PC-9 (cell line): ENCODE measurements at regions of chr19 and their contacts with region 1.

Region 1: DNA sequence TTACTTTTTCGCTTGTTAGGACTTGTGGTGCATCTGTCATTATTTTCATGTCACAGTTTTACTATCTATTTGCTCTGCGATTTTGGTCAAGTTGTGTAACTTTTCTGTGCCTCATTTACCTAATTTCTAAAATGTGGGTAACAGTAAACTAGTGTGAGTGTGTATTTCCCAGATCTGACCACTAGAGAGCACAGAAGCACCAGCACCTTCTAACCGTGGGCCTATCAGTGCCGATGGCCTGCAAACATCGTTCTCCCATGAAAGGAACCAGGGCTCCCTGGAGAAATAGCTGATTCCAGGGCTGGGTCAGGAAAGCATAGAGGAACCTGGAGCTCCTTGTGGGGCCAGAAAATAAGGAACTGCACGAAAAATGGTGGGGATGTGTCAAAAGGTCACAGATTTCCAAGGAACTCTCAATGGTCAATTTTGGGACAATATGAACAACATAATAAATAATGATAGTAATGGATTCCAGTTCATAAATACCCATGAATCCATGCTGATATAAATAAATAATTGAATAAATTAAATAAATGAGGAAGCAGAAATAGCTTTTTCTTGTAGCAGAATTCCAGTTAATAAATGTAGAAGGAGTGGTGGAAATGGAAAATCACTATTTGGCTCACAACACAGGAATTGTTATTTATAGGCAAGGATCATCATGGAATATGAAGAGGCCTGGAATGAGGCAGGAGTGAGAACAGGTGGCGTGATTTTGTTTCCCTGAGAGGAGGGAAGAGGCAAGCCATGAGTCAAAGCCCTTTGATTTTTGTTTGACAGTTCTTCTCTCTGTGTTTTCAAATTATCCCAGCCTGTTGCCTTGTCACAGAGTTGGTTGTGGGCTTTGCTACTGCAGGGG is 31.1 kb downstream of the CEACAM8 start:
- DNase-seq: peak in 1 of 2 experiments; percentile 26
- H3K4me3 ChIP-seq: no peak overlapping the region
- H3K27ac ChIP-seq: no peak overlapping the region
- H3K4me1 ChIP-seq: no peaks in the 10 kb centered on the region
- H3K27me3 ChIP-seq: no peaks in the 10 kb centered on the region
- CTCF ChIP-seq: peak; percentile 73

Region 2: DNA sequence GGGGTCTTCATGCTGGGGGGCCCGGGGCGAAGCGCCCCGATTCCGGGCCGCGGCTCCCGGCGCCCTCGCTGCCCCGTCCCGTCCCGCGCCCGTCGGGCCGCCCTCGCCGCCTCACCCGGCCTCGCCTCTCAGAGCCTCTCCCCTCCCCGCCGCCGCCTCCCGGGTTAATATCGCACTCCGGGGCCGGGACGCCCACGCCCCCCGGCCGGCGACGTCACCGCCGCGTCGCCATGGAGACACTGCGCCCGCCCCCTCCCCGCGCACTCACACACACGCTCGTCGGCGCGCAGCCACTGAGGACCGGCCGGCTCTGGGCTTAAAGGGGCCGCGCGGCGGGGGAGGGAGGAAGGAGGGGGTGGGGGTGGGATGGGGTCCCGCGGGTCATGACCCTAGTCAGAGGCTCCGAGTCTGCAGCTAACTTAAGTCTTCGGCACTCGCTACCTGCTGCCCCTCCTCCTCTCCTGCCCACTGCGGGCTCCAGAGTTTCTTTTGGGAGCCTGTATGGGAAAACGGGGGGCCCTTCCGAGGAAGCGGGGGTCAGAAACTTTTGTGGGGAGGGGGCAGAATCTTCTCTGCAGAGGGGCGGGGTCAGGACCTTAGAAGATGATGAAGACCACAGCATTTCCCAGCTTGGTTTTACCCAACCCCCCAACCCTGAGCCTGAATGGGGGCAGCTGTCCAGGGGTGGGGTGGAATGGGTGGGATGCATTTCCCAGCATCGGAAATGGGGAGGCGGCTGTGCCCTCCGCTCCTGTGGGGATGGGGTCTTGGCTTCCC is 308.4 kb before region 1 on chr19 and contains the start of gene ERF:
- CTCF ChIA-PET with region 1: interaction called, 10 read pairs
- POLR2A ChIA-PET with region 1: no interaction called
- intact Hi-C with region 1: no loop called
- DNase-seq: peak; percentile 71 to 93
- H3K4me3 ChIP-seq: peak within 1 kb of the TSS; percentile 98
- H3K27ac ChIP-seq: 0 out of 2 replicates have a peak within 1 kb of the TSS, but pooled peaks have one; percentile 13
- H3K4me1 ChIP-seq: peaks cover 13% of the 10 kb centered on the region
- H3K27me3 ChIP-seq: no peaks in the 10 kb centered on the region
- CTCF ChIP-seq: no peak
- total RNA-seq, gene ERF: 57.4 and 79.1 TPM in 2 replicates

Region 3: DNA sequence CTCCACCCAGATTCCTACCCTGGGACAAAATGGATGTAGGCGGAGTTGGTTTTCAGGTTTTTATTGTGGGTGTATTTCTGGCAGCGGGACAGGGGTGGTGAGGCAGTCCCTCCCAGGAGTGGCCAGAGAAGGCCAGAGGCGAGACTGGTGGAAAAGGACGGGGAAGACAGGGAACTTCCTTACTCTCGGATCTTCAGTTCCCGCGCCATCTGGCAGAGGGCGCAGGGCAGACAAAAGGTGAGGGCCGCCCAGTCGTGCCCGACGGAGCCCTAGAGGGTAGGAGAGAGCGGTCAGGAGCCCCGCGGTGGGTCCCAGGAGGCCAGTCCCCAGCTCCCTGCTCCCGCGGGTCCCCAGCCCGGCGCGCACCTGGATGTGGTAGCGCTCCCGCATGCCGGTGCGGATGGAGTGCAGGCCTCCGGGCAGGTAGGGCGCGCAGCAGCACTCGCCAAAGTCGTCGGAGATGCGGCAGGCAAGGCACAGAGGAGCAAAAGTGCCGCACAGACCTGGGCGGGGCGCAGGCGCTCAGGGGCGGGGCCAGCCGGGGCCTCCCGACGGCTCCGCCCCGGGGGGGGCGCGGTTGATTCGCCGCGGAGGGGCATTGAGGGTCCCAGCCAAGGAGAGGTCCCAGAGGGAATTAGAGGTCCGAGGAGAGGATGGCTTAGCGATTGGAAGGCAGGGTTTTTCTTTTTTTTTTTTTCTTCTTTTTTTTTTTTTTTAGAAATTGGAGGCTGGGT is 176.4 kb before region 1 on chr19:
- CTCF ChIA-PET with region 1: no interaction called
- POLR2A ChIA-PET with region 1: no interaction called
- intact Hi-C with region 1: no loop called
- DNase-seq: peak; percentile 69 to 89
- H3K4me3 ChIP-seq: peak overlapping the region; percentile 63
- H3K27ac ChIP-seq: peak overlapping the region; percentile 10; the same call in 1 of the 2 replicates
- H3K4me1 ChIP-seq: peaks cover 17% of the 10 kb centered on the region
- H3K27me3 ChIP-seq: peaks cover 5% of the 10 kb centered on the region; the same call in 1 of the 2 replicates
- CTCF ChIP-seq: peak; percentile 74

Region 4: GRCh38 chr19:42450314-42450934 is 113.2 kb before region 1 on chr19:
- CTCF ChIA-PET with region 1: interaction called, 3 read pairs
- POLR2A ChIA-PET with region 1: no interaction called
- intact Hi-C with region 1: loop called (anchors 1 kb)
- DNase-seq: peak; percentile 78 to 95
- H3K4me3 ChIP-seq: no peak overlapping the region
- H3K27ac ChIP-seq: peak overlapping the region; percentile 89
- H3K4me1 ChIP-seq: peaks cover 47% of the 10 kb centered on the region
- H3K27me3 ChIP-seq: no peaks in the 10 kb centered on the region
- CTCF ChIP-seq: peak; percentile 92

Region 5: DNA sequence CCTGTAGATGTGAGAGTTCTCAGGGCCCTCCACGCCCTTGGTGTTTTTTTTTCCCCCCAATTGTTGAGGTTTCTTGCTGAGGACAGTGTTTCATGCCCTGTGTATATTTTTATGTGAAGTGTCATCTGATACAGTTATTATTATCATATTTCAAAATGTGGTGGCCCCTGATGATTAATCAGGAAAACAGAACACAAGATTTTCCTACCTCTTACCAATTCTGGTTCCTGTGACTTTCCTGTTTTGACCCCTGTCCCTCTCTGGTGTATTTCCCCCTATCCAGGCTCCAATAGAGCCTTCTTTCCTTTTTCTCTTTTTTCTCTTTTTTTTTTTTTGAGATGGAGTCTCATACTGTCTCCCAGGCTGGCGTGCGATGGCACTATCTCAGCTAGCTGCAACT is 201.3 kb after region 1 on chr19:
- CTCF ChIA-PET with region 1: no interaction called
- POLR2A ChIA-PET with region 1: no interaction called
- intact Hi-C with region 1: no loop called
- DNase-seq: no peak
- H3K4me3 ChIP-seq: no peak overlapping the region
- H3K27ac ChIP-seq: no peak overlapping the region
- H3K4me1 ChIP-seq: peaks cover 20% of the 10 kb centered on the region
- H3K27me3 ChIP-seq: no peaks in the 10 kb centered on the region
- CTCF ChIP-seq: no peak